Heart right ventricle (tissue), 16 donors: ENCODE measurements at regions of chr1 and their contacts with region 1.

Region 1: GRCh38 chr1:244137725-244138124 is 86.6 kb downstream of the ZBTB18 start:
- DNase-seq: no peak
- ATAC-seq: peak in 4 of 8 donors; percentile 16 to 31 (median 21)
- H3K4me3 ChIP-seq: peak overlapping the region in 1 of 10 donors; percentile 17
- H3K27ac ChIP-seq: peak overlapping the region in 9 of 10 donors; percentile 51 to 86 (median 67)
- H3K4me1 ChIP-seq: peaks cover 0 to 28% (median 9%) of the 10 kb centered on the region in 9 donors
- H3K27me3 ChIP-seq: peaks cover 0 to 11% (median 0%) of the 10 kb centered on the region in 7 donors
- CTCF ChIP-seq: no peak

Region 2: DNA sequence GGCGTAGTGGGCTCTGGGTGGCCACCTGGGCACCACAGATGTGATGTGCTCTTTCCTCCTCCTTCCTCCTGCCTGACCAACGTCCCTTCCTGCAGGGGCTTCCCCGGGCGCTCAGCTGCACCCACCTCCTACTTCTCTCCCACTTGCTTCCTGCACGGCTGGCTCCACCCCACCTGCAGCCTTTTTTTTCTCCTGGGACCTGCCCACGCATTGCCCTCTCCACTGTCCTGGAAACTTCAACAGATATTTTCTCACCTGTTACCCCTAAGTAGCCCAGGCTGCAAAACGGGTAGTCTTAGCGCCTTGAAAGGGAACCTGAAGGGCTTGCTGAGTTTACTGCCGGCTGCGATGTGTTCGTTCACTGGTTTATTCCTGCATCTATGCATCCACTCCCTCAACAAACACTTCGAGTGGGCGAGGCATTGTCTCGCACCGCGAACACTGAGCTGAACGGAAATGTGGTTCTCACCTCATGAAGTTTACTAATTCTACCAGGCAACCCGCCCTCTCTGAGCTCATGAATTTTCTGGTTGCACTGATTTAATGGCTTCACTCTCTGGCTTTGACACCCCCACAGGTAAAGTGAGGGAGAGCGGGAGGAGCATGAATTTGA is 63.1 kb before region 1 on chr1:
- intact Hi-C with region 1: loop called in 1 of 10 experiments (anchors 10 kb)
- DNase-seq: no peak
- ATAC-seq: no peak
- H3K4me3 ChIP-seq: peak overlapping the region in 1 of 10 donors; percentile 7
- H3K27ac ChIP-seq: no peak overlapping the region
- H3K4me1 ChIP-seq: peaks cover 0 to 17% (median 0%) of the 10 kb centered on the region in 9 donors
- H3K27me3 ChIP-seq: peaks cover 0 to 31% (median 23%) of the 10 kb centered on the region in 7 donors
- CTCF ChIP-seq: no peak

Region 3: GRCh38 chr1:244087611-244088010 is 50.1 kb before region 1 on chr1:
- intact Hi-C with region 1: no loop called
- DNase-seq: no peak
- ATAC-seq: no peak
- H3K4me3 ChIP-seq: no peak overlapping the region
- H3K27ac ChIP-seq: no peak overlapping the region
- H3K4me1 ChIP-seq: peaks cover 0 to 14% (median 0%) of the 10 kb centered on the region in 9 donors
- H3K27me3 ChIP-seq: peaks cover 0 to 12% (median 3%) of the 10 kb centered on the region in 7 donors
- CTCF ChIP-seq: no peak

Region 4: GRCh38 chr1:244224487-244225430 is 87.0 kb after region 1 on chr1:
- intact Hi-C with region 1: no loop called
- DNase-seq: peak in 1 of 2 donors; percentile 44
- ATAC-seq: peak in 5 of 8 donors; percentile 49 to 65 (median 55)
- H3K4me3 ChIP-seq: peak overlapping the region in 1 of 10 donors; percentile 45
- H3K27ac ChIP-seq: peak overlapping the region in 3 of 10 donors; percentile 13 to 93 (median 15)
- H3K4me1 ChIP-seq: peaks cover 0 to 13% (median 0%) of the 10 kb centered on the region in 9 donors
- H3K27me3 ChIP-seq: peaks cover 0 to 8% (median 0%) of the 10 kb centered on the region in 7 donors
- CTCF ChIP-seq: no peak